Mammary epithelial cell (primary cell): ENCODE measurements at regions of chr16 and their contacts with region 1.

Region 1: DNA sequence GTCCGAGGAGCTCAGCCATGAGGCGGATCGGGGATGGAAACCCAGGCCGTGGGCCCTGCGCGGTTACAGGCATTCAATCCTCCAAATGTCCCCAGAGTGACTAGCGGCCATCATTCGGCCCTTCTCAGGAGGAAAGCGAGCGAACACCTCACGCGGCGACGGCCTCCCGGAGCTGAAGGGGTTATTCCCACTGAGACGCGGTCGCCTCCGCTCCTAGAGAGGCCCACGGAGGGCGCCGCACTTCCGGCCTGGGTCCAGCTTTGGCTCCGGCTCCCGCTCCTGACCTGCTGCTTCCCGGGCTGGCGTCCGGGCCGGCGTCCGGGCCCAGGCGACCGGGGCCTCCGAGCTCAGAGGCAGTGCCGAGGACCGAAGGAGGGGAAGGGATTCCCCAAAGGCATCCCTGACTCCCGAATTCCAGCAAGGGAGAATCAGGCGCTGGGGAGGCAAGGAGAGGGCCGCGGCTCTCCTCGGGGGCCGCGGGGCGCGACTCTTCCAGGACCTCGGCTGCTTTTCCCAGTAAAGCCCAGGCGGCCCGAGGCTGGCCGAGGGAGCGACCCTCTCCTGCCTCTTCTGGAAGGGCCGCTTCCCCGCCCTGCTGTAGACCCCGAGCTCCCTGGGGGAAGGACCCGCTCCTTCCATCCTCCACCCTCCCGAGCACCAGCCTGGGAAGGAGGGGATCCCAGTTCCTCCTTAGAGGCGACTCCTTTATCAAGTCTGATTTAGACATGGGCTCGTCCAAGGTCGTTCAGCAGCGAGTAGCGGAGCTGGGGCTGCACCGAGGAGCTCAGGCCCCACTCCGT is 18.6 kb upstream of the ZNF629 start:
- DNase-seq: peak; percentile 70
- H3K4me3 ChIP-seq: peak overlapping the region; percentile 64 to 83 (median 80)
- H3K27ac ChIP-seq: peak overlapping the region; percentile 51
- H3K4me1 ChIP-seq: peaks cover 13% of the 10 kb centered on the region
- H3K27me3 ChIP-seq: no peaks in the 10 kb centered on the region
- CTCF ChIP-seq: no peak

Region 2: DNA sequence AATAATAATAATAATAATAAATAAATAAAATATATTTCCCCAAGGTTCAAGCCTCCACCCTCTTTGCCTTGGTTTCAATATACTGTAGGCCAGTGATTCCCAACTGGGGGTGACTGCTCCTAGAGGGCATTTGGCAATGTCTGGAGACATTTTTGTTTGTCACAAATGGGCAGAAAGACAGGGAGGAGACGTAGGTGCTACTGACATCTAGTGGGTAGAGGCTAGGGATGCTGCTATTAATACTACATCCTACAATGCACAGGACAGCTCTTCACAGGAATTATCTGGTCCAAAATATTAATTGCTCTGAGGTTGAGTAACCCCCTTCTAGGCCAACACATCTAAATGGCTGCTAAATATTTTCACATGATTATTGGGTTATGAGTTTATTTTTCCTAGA is 167.6 kb before region 1 on chr16:
- CTCF ChIA-PET with region 1: no interaction called
- dilution Hi-C with region 1: no loop called
- in situ Hi-C with region 1: no loop called
- intact Hi-C with region 1: no loop called
- DNase-seq: peak; percentile 54
- H3K4me3 ChIP-seq: no peak overlapping the region
- H3K27ac ChIP-seq: no peak overlapping the region
- H3K4me1 ChIP-seq: no peaks in the 10 kb centered on the region
- H3K27me3 ChIP-seq: no peaks in the 10 kb centered on the region
- CTCF ChIP-seq: peak; percentile 55 to 74

Region 3: GRCh38 chr16:30710971-30711370 is 94.6 kb before region 1 on chr16:
- CTCF ChIA-PET with region 1: no interaction called
- dilution Hi-C with region 1: no loop called
- in situ Hi-C with region 1: no loop called
- intact Hi-C with region 1: no loop called
- DNase-seq: no peak
- H3K4me3 ChIP-seq: no peak overlapping the region
- H3K27ac ChIP-seq: no peak overlapping the region
- H3K4me1 ChIP-seq: peaks cover 15% of the 10 kb centered on the region
- H3K27me3 ChIP-seq: no peaks in the 10 kb centered on the region
- CTCF ChIP-seq: no peak

Region 4: DNA sequence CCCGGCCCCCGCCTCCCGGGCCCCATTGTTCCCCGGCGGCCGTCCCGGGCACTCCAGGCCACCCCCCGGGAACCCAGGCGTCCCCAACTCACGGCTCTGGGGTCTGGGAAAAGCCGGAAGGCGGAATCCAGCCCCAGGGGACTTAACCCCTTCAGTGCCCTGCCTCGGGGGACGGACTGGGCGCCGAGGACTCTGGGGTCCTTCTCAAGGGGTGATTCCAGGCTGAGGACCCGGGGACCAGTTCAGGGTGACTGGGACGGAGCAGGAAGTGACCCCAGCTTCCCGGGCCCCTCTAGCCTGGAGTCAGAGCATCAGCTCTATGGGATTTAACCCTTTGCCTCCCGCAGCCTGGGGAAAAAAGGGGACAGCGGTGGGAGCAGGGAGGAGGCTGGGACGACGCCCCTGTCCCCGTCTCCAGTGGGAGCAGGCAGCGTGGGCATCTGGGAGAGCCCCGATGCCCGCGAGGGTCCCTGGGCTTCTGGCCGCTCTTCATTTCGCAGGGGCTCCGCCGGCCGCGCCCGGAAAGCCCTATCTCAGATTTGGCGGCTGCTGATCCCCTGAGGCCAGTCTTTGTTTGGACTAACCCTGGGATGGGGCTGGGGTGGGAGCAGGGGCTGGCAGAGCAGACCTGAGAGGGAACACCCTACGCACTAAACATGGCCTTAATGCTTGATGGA is 18.5 kb before region 1 on chr16 and contains the start of gene ZNF629:
- CTCF ChIA-PET with region 1: no interaction called
- dilution Hi-C with region 1: no loop called
- in situ Hi-C with region 1: no loop called
- intact Hi-C with region 1: loop called (anchors 1 kb)
- DNase-seq: peak; percentile 49
- H3K4me3 ChIP-seq: peak within 1 kb of the TSS; percentile 72 to 87 (median 86)
- H3K27ac ChIP-seq: peak within 1 kb of the TSS; percentile 59
- H3K4me1 ChIP-seq: peaks cover 12% of the 10 kb centered on the region
- H3K27me3 ChIP-seq: no peaks in the 10 kb centered on the region
- CTCF ChIP-seq: no peak
- total RNA-seq, gene ZNF629: 13.6 to 19.2 TPM

Region 5: GRCh38 chr16:30867747-30868146 is 62.2 kb after region 1 on chr16:
- CTCF ChIA-PET with region 1: no interaction called
- dilution Hi-C with region 1: no loop called
- in situ Hi-C with region 1: no loop called
- intact Hi-C with region 1: no loop called
- DNase-seq: no peak
- H3K4me3 ChIP-seq: no peak overlapping the region
- H3K27ac ChIP-seq: no peak overlapping the region
- H3K4me1 ChIP-seq: no peaks in the 10 kb centered on the region
- H3K27me3 ChIP-seq: no peaks in the 10 kb centered on the region
- CTCF ChIP-seq: peak in 1 of 2 donors; percentile 25

Region 6: GRCh38 chr16:31853300-31853699 is 1047.7 kb after region 1 on chr16:
- CTCF ChIA-PET with region 1: no interaction called
- dilution Hi-C with region 1: no loop called
- in situ Hi-C with region 1: no loop called
- intact Hi-C with region 1: no loop called
- DNase-seq: no peak
- H3K4me3 ChIP-seq: no peak overlapping the region
- H3K27ac ChIP-seq: no peak overlapping the region
- H3K4me1 ChIP-seq: no peaks in the 10 kb centered on the region
- H3K27me3 ChIP-seq: no peaks in the 10 kb centered on the region
- CTCF ChIP-seq: no peak